Activated CD8-positive, alpha-beta T cell treated with anti-CD3 and anti-CD28 coated beads for 36 hours (primary cell): ENCODE measurements at regions of chr1 and their contacts with region 1.

Region 1: DNA sequence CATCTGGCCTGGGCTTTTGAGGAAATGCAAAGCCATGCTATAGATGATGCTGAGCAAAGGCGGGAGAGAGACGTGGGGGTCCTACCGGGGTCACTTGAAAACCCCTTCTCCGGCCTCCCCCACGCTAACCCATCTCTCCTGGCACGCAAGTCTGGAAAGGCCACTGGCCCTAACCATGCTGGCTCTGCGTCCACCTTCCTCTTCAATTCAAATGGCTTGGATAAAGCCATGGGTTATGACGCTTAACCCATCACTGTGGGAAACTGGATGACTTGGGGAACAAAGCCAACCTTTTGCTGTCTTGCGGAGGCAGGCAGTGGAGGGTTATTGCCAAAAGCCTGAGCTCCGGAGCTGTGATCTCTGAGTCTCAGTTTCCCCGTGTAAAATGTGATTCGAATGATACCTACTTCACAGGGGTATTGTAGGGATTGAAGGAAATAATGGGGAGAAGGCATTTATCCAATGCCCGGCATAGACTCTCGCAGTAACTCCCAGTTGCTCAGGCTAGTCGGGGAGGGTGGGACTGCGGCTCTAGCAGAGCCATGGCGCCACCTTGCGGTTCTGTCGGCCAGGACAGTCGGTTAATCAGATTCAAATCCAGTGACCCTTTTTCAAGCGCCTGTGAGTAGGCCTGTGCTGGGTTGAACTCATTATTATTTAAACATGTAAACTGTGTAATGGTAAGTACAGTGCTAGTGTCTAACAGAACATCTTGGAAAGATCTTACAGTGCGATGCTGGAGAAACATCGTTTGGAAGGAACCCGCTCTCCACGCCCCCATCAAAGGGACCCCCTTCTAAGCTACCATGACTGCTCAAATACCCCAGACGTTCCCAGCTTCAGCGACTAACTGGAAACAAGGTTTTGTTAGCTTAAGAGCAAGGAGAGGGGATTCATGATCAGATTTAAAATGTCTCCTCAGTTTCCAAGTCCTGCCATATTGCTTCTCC is 20.3 kb downstream of the NEK2 start:
- DNase-seq: peak; percentile 92
- ATAC-seq: peak; percentile 97
- H3K4me3 Mint-ChIP-seq: no peak overlapping the region
- H3K27ac Mint-ChIP-seq: no peak overlapping the region
- H3K4me1 Mint-ChIP-seq: no peaks in the 10 kb centered on the region
- H3K27me3 Mint-ChIP-seq: no peaks in the 10 kb centered on the region
- CTCF ChIP-seq: peak; percentile 98

Region 2: GRCh38 chr1:211476200-211476849 is 178.8 kb before region 1 on chr1:
- CTCF ChIA-PET with region 1: interaction called, 16 read pairs
- POLR2A ChIA-PET with region 1: no interaction called
- intact Hi-C with region 1: no loop called
- DNase-seq: peak; percentile 90
- ATAC-seq: peak; percentile 87
- H3K4me3 Mint-ChIP-seq: no peak overlapping the region
- H3K27ac Mint-ChIP-seq: no peak overlapping the region
- H3K4me1 Mint-ChIP-seq: no peaks in the 10 kb centered on the region
- H3K27me3 Mint-ChIP-seq: peaks cover 15% of the 10 kb centered on the region
- CTCF ChIP-seq: peak; percentile 79

Region 3: GRCh38 chr1:211578640-211579433 is 76.3 kb before region 1 on chr1 and contains the start of gene SLC30A1:
- CTCF ChIA-PET with region 1: interaction called, 11 read pairs
- POLR2A ChIA-PET with region 1: no interaction called
- intact Hi-C with region 1: loop called (anchors 5 kb)
- DNase-seq: peak; percentile 100
- ATAC-seq: peak; percentile 94
- H3K4me3 Mint-ChIP-seq: peak within 1 kb of the TSS; percentile 96
- H3K27ac Mint-ChIP-seq: peak within 1 kb of the TSS; percentile 92
- H3K4me1 Mint-ChIP-seq: peaks cover 29% of the 10 kb centered on the region
- H3K27me3 Mint-ChIP-seq: no peaks in the 10 kb centered on the region
- CTCF ChIP-seq: no peak
- total RNA-seq, gene SLC30A1: 6.2 to 7.2 TPM

Region 4: GRCh38 chr1:211643324-211644212 is 11.5 kb before region 1 on chr1:
- CTCF ChIA-PET with region 1: interaction called, 53 read pairs
- POLR2A ChIA-PET with region 1: interaction called, 3 read pairs
- intact Hi-C with region 1: no loop called
- DNase-seq: peak; percentile 45
- ATAC-seq: peak; percentile 73
- H3K4me3 Mint-ChIP-seq: no peak overlapping the region
- H3K27ac Mint-ChIP-seq: no peak overlapping the region
- H3K4me1 Mint-ChIP-seq: peaks cover 11% of the 10 kb centered on the region
- H3K27me3 Mint-ChIP-seq: no peaks in the 10 kb centered on the region
- CTCF ChIP-seq: no peak

Region 5: DNA sequence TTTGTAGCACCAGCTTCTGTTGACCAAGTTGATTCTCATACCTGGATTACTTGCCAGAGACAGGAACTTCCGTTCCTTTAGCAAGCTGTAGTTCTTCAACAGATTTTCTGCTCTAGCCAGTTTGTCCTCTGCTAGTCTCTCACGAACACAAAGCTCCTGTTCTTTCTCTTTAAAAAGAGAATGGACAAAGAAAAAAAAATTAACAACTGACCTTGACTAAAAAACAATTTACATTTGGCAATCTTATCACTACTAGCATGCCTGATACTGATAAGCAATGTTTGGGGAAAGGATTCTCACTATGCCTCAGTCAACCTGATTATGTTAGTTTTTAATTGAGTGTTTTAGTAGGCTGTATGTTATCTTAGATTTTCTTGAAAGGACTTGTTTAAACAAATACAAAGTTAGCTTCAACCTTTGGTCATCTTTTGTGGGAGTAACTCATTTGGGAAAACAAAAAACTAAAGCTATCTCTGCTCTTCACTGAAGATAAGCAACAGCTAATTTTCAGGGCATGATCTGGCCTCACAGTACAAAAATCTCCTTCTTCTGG is 12.0 kb after region 1 on chr1:
- CTCF ChIA-PET with region 1: interaction called, 24 read pairs
- POLR2A ChIA-PET with region 1: no interaction called
- intact Hi-C with region 1: no loop called
- DNase-seq: no peak
- ATAC-seq: no peak
- H3K4me3 Mint-ChIP-seq: no peak overlapping the region
- H3K27ac Mint-ChIP-seq: no peak overlapping the region
- H3K4me1 Mint-ChIP-seq: no peaks in the 10 kb centered on the region
- H3K27me3 Mint-ChIP-seq: no peaks in the 10 kb centered on the region
- CTCF ChIP-seq: no peak

Region 6: GRCh38 chr1:211675230-211676105 is 20.4 kb after region 1 on chr1 and contains the start of gene NEK2:
- CTCF ChIA-PET with region 1: interaction called, 24 read pairs
- POLR2A ChIA-PET with region 1: no interaction called
- intact Hi-C with region 1: no loop called
- DNase-seq: peak; percentile 96
- ATAC-seq: peak; percentile 95
- H3K4me3 Mint-ChIP-seq: peak within 1 kb of the TSS; percentile 92
- H3K27ac Mint-ChIP-seq: peak within 1 kb of the TSS; percentile 69
- H3K4me1 Mint-ChIP-seq: peaks cover 9% of the 10 kb centered on the region
- H3K27me3 Mint-ChIP-seq: no peaks in the 10 kb centered on the region
- CTCF ChIP-seq: no peak
- total RNA-seq, gene NEK2: 29.9 to 30.0 TPM